ENCODE measurements at regions of chr15 and their contacts with region 1.

Region 1: GRCh38 chr15:73573572-73573971 is 59.6 kb downstream of the NPTN start:
- DNase-seq: peak; percentile 64
- H3K4me3 ChIP-seq: no peak overlapping the region
- H3K27ac ChIP-seq: no peak overlapping the region
- H3K4me1 ChIP-seq: peaks cover 48% of the 10 kb centered on the region
- H3K27me3 ChIP-seq: no peaks in the 10 kb centered on the region
- CTCF ChIP-seq: no peak

Region 2: GRCh38 chr15:73601451-73602445 is 28.2 kb after region 1 on chr15:
- CTCF ChIA-PET with region 1: no interaction called
- dilution Hi-C with region 1: no loop called
- in situ Hi-C with region 1: no loop called
- intact Hi-C with region 1: loop called (anchors 2 kb)
- DNase-seq: peak; percentile 42
- H3K4me3 ChIP-seq: no peak overlapping the region
- H3K27ac ChIP-seq: peak overlapping the region; percentile 78
- H3K4me1 ChIP-seq: peaks cover 51% of the 10 kb centered on the region
- H3K27me3 ChIP-seq: no peaks in the 10 kb centered on the region
- CTCF ChIP-seq: no peak

Region 3: GRCh38 chr15:73704869-73705645 is 131.5 kb after region 1 on chr15:
- CTCF ChIA-PET with region 1: interaction called, 4 read pairs
- dilution Hi-C with region 1: no loop called
- in situ Hi-C with region 1: loop called in 1 of 2 experiments (anchors 5 kb)
- intact Hi-C with region 1: no loop called
- DNase-seq: peak; percentile 27
- H3K4me3 ChIP-seq: no peak overlapping the region
- H3K27ac ChIP-seq: no peak overlapping the region
- H3K4me1 ChIP-seq: no peaks in the 10 kb centered on the region
- H3K27me3 ChIP-seq: no peaks in the 10 kb centered on the region
- CTCF ChIP-seq: peak; percentile 71 to 79

Measured in mammary epithelial cell (primary cell).